GM12878 (cell line): ENCODE measurements at regions of chr12 and their contacts with region 1.

Region 1: DNA sequence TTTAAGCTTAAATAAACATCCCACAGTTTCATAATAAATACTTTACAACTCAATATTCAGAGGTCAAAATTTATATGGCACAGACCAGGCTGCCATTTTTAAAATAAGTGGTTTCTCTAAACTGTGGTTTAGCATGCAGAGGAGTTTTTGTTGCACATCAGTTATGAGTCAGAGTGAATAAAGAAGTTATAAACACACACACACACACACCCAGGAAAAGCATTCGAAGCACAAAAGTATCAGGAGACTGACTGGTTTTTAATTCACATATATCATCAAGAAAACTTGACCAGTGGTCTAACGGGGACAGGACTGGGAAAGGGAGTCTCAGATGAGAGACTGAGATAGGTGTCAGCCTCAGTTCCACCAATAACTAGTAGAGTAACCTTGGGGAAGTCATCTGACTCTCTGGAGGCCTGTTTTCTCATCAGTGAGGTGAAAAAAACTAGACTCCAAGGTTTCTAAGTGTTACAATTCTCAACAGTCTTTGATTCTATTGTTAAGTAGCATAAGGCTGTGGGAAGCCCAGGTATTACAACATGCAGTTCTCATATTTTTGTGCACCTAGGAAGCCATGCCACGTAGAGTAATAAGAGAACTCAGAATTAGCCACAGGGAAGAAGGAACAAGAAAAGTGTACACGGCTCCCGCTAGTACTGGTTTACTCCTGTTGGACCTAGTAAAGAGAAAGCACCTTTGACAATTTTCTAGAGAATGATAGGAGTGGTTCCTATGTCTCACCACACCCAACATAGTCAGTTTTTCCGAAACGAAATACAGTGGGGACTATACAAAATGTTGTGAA is 5.2 kb downstream of the PPTC7 start:
- DNase-seq: peak; percentile 84
- ATAC-seq: peak; percentile 45
- H3K4me3 ChIP-seq: peak overlapping the region; percentile 82
- H3K27ac ChIP-seq: peak overlapping the region; percentile 95
- H3K4me1 ChIP-seq: peaks cover 12% of the 10 kb centered on the region
- H3K27me3 ChIP-seq: no peaks in the 10 kb centered on the region
- CTCF ChIP-seq: no peak
- EP300 ChIP-seq: peak; percentile 67 to 76; a peak in 2 of 4 replicates
- POLR2A ChIP-seq: no peak
- RAD21 ChIP-seq: no peak

Region 2: GRCh38 chr12:110468212-110469048 is 109.5 kb before region 1 on chr12 and contains the starts of genes FAM216A and GPN3:
- CTCF ChIA-PET with region 1: interaction called, 11 read pairs
- POLR2A ChIA-PET with region 1: interaction called, 8 read pairs
- RAD21 ChIA-PET with region 1: interaction called, 9 read pairs
- SMC1A ChIA-PET with region 1: interaction called, 5 read pairs
- in situ Hi-C with region 1: no loop called
- intact Hi-C with region 1: no loop called
- DNase-seq: peak; percentile 96
- ATAC-seq: peak; percentile 88
- H3K4me3 ChIP-seq: peak within 1 kb of the TSS; percentile 73
- H3K27ac ChIP-seq: peak within 1 kb of the TSS; percentile 91
- H3K4me1 ChIP-seq: peaks cover 6% of the 10 kb centered on the region
- H3K27me3 ChIP-seq: no peaks in the 10 kb centered on the region
- CTCF ChIP-seq: no peak
- EP300 ChIP-seq: no peak
- POLR2A ChIP-seq: peak; percentile 91
- RAD21 ChIP-seq: no peak
- polyA plus RNA-seq, gene FAM216A: 15.0 to 36.0 TPM
- polyA plus RNA-seq, gene GPN3: 76.9 to 78.7 TPM

Region 3: GRCh38 chr12:110543252-110543959 is 34.5 kb before region 1 on chr12:
- CTCF ChIA-PET with region 1: interaction called, 11 read pairs
- POLR2A ChIA-PET with region 1: interaction called, 28 read pairs
- RAD21 ChIA-PET with region 1: interaction called, 34 read pairs
- SMC1A ChIA-PET with region 1: interaction called, 308 read pairs
- in situ Hi-C with region 1: no loop called
- intact Hi-C with region 1: no loop called
- DNase-seq: peak; percentile 90
- ATAC-seq: peak; percentile 92
- H3K4me3 ChIP-seq: no peak overlapping the region; the same call in 1 of the 2 replicates
- H3K27ac ChIP-seq: peak overlapping the region; percentile 94
- H3K4me1 ChIP-seq: peaks cover 28% of the 10 kb centered on the region
- H3K27me3 ChIP-seq: no peaks in the 10 kb centered on the region
- CTCF ChIP-seq: no peak
- EP300 ChIP-seq: peak in 1 of 2 experiments; percentile 53; a peak in 1 of 4 replicates
- POLR2A ChIP-seq: 0 out of 2 replicates have a peak, but pooled peaks have one; percentile 26
- RAD21 ChIP-seq: no peak

Region 4: DNA sequence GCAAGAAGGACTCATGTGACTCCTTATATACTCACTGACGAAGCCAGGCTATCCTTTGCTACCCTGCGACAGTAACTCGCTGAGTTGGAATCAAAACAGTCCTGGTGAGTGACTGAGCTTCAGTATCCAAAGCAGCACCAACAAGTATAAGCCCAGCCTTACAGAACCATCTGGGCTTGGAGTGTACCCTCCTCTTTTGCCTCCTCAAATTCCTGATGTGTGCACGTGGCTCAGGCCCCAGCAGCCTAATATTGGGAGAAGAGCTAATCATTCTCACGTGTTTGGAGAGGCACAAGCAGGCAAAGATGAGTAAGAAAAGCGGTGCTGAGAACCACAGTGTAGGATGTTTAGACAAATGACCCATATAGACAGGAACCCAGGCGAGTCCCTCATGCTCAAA is 29.2 kb before region 1 on chr12:
- CTCF ChIA-PET with region 1: interaction called, 11 read pairs
- POLR2A ChIA-PET with region 1: interaction called, 28 read pairs
- RAD21 ChIA-PET with region 1: interaction called, 34 read pairs
- SMC1A ChIA-PET with region 1: interaction called, 308 read pairs
- in situ Hi-C with region 1: no loop called
- intact Hi-C with region 1: no loop called
- DNase-seq: no peak
- ATAC-seq: no peak
- H3K4me3 ChIP-seq: no peak overlapping the region
- H3K27ac ChIP-seq: peak overlapping the region; percentile 31; the same call in 1 of the 2 replicates
- H3K4me1 ChIP-seq: peaks cover 16% of the 10 kb centered on the region
- H3K27me3 ChIP-seq: no peaks in the 10 kb centered on the region
- CTCF ChIP-seq: no peak
- EP300 ChIP-seq: no peak
- POLR2A ChIP-seq: no peak
- RAD21 ChIP-seq: no peak

Region 5: GRCh38 chr12:110555577-110556406 is 22.1 kb before region 1 on chr12:
- CTCF ChIA-PET with region 1: interaction called, 9 read pairs
- POLR2A ChIA-PET with region 1: interaction called, 14 read pairs
- RAD21 ChIA-PET with region 1: interaction called, 9 read pairs
- SMC1A ChIA-PET with region 1: interaction called, 187 read pairs
- in situ Hi-C with region 1: no loop called
- intact Hi-C with region 1: no loop called
- DNase-seq: no peak
- ATAC-seq: no peak
- H3K4me3 ChIP-seq: no peak overlapping the region
- H3K27ac ChIP-seq: no peak overlapping the region
- H3K4me1 ChIP-seq: peaks cover 4% of the 10 kb centered on the region
- H3K27me3 ChIP-seq: no peaks in the 10 kb centered on the region
- CTCF ChIP-seq: no peak
- EP300 ChIP-seq: no peak
- POLR2A ChIP-seq: no peak
- RAD21 ChIP-seq: no peak

Region 6: GRCh38 chr12:110563702-110564640 is 13.9 kb before region 1 on chr12:
- CTCF ChIA-PET with region 1: interaction called, 15 read pairs
- POLR2A ChIA-PET with region 1: interaction called, 18 read pairs
- RAD21 ChIA-PET with region 1: interaction called, 26 read pairs
- SMC1A ChIA-PET with region 1: interaction called, 187 read pairs
- in situ Hi-C with region 1: no loop called
- intact Hi-C with region 1: loop called (anchors 2 kb)
- DNase-seq: no peak
- ATAC-seq: peak; percentile 10; the same call in 1 of the 3 replicates
- H3K4me3 ChIP-seq: no peak overlapping the region
- H3K27ac ChIP-seq: peak overlapping the region; percentile 33; the same call in 1 of the 2 replicates
- H3K4me1 ChIP-seq: peaks cover 20% of the 10 kb centered on the region; the same call in 1 of the 2 replicates
- H3K27me3 ChIP-seq: no peaks in the 10 kb centered on the region
- CTCF ChIP-seq: no peak
- EP300 ChIP-seq: no peak
- POLR2A ChIP-seq: no peak
- RAD21 ChIP-seq: no peak

Region 7: GRCh38 chr12:110590806-110591326 is 12.9 kb after region 1 on chr12:
- CTCF ChIA-PET with region 1: interaction called, 6 read pairs
- POLR2A ChIA-PET with region 1: interaction called, 8 read pairs
- RAD21 ChIA-PET with region 1: interaction called, 11 read pairs
- SMC1A ChIA-PET with region 1: interaction called, 17 read pairs
- in situ Hi-C with region 1: no loop called
- intact Hi-C with region 1: no loop called
- DNase-seq: peak; percentile 79
- ATAC-seq: peak; percentile 93
- H3K4me3 ChIP-seq: peak overlapping the region; percentile 42; the same call in 1 of the 2 replicates
- H3K27ac ChIP-seq: peak overlapping the region; percentile 85
- H3K4me1 ChIP-seq: peaks cover 15% of the 10 kb centered on the region
- H3K27me3 ChIP-seq: no peaks in the 10 kb centered on the region
- CTCF ChIP-seq: no peak
- EP300 ChIP-seq: peak in 1 of 2 experiments; percentile 81; a peak in 2 of 4 replicates
- POLR2A ChIP-seq: no peak
- RAD21 ChIP-seq: no peak

Region 8: DNA sequence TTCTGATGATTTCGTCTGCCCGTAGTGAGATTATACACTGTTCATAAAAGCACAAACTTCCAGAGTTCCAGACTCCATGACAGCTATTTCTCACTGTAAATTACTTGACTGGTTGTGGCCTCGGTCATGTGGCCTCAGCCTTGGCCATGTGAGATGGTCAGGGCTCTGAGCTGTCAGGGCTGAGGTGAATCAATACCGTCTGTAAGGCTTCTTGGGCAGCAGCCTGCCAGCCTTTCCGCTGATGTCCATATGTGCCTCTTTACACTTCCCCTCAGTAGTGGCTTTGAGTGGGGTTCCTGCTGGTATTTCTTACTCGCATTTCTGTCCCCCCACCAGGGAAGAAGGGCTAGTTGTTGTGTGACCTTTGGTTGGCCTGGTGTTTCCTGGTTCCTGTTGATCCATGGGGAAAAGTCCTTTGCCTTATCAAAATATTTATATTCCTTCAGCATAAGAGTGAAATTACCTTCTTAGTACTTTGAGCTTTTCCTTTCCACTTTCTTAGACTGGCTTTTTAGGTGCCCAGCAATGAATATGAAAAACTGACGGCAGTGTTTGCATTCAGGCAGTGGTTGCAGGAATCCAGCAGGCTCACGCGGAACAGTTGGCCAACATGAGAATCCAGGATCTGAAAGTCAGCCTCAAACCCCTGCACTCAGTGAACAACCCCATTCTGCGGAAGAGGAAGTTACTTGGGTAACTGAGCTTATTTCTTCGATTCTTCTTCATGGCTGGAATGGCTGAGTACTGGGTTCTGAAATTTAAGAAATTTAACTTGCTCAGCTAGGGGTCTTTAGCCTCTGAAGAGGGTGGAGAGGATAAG is 1310.2 kb after region 1 on chr12:
- CTCF ChIA-PET with region 1: no interaction called
- POLR2A ChIA-PET with region 1: no interaction called
- RAD21 ChIA-PET with region 1: no interaction called
- SMC1A ChIA-PET with region 1: no interaction called
- in situ Hi-C with region 1: no loop called
- intact Hi-C with region 1: no loop called
- DNase-seq: no peak
- ATAC-seq: no peak
- H3K4me3 ChIP-seq: no peak overlapping the region
- H3K27ac ChIP-seq: no peak overlapping the region
- H3K4me1 ChIP-seq: no peaks in the 10 kb centered on the region
- H3K27me3 ChIP-seq: no peaks in the 10 kb centered on the region
- CTCF ChIP-seq: no peak
- EP300 ChIP-seq: no peak
- POLR2A ChIP-seq: no peak
- RAD21 ChIP-seq: no peak